MCF 10A (cell line): ENCODE measurements at regions of chr20 and their contacts with region 1.

Region 1: GRCh38 chr20:47317127-47317895 is 39.2 kb downstream of the ZMYND8 start:
- DNase-seq: peak; percentile 100
- H3K4me3 Mint-ChIP-seq: peak overlapping the region; percentile 65
- H3K27ac Mint-ChIP-seq: peak overlapping the region; percentile 94
- H3K4me1 Mint-ChIP-seq: peaks cover 65% of the 10 kb centered on the region
- H3K27me3 Mint-ChIP-seq: no peaks in the 10 kb centered on the region
- CTCF ChIP-seq: no peak

Region 2: GRCh38 chr20:47231382-47232039 is 85.8 kb before region 1 on chr20:
- CTCF ChIA-PET with region 1: no interaction called
- POLR2A ChIA-PET with region 1: no interaction called
- intact Hi-C with region 1: no loop called
- DNase-seq: no peak
- H3K4me3 Mint-ChIP-seq: no peak overlapping the region
- H3K27ac Mint-ChIP-seq: no peak overlapping the region
- H3K4me1 Mint-ChIP-seq: no peaks in the 10 kb centered on the region
- H3K27me3 Mint-ChIP-seq: no peaks in the 10 kb centered on the region
- CTCF ChIP-seq: no peak

Region 3: GRCh38 chr20:47304287-47304686 is 13.0 kb before region 1 on chr20:
- CTCF ChIA-PET with region 1: interaction called, 3 read pairs
- POLR2A ChIA-PET with region 1: interaction called, 63 read pairs
- intact Hi-C with region 1: no loop called
- DNase-seq: no peak
- H3K4me3 Mint-ChIP-seq: no peak overlapping the region
- H3K27ac Mint-ChIP-seq: peak overlapping the region; percentile 49
- H3K4me1 Mint-ChIP-seq: peaks cover 15% of the 10 kb centered on the region
- H3K27me3 Mint-ChIP-seq: no peaks in the 10 kb centered on the region
- CTCF ChIP-seq: no peak

Region 4: DNA sequence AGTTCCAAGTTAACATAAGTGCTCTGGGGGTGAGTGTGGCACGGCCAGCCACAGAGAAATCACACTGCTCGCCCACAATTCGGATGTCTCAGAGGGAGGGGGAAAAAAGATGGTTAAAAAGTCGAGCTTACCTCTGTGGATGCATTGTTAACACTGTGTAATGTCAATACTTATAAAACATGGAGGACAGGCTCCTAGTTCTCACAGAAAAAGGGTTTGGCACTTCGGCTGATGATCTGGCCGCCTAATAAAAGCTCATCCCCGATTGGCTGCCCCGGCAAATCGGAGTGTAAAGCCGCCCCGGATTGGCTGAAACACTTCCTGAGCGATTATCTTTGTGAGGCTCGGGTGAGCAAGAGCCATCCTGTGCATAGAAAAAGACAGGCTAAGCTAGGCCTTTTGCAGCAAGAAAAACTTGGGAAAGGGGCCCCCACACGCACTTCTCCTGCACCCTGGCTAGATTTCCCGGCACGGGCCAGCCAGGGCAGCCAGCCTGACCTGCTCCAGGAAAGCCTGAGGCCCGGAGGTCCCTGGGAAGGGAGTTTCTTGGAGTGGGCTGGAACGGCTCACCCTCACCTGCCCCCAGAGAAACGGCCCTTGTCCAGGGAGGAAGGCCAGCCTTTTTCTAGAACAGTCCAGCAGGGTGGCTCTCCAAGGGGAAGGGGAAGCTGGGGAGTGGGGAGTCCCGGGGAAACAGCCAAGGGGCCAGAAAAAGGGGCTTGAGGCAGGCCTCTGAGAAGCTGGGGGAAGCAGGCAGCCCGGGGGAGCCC is 39.4 kb after region 1 on chr20 and contains the start of gene ZMYND8:
- CTCF ChIA-PET with region 1: interaction called, 50 read pairs
- POLR2A ChIA-PET with region 1: interaction called, 1,977 read pairs
- intact Hi-C with region 1: loop called (anchors 1 kb)
- DNase-seq: peak; percentile 94
- H3K4me3 Mint-ChIP-seq: peak within 1 kb of the TSS; percentile 70
- H3K27ac Mint-ChIP-seq: no peak within 1 kb of the TSS
- H3K4me1 Mint-ChIP-seq: peaks cover 72% of the 10 kb centered on the region
- H3K27me3 Mint-ChIP-seq: no peaks in the 10 kb centered on the region
- CTCF ChIP-seq: no peak
- total RNA-seq, gene ZMYND8: 126 and 127 TPM in 2 replicates

Region 5: GRCh38 chr20:47392015-47392720 is 74.9 kb after region 1 on chr20:
- CTCF ChIA-PET with region 1: interaction called, 3 read pairs
- POLR2A ChIA-PET with region 1: interaction called, 12 read pairs
- intact Hi-C with region 1: no loop called
- DNase-seq: peak; percentile 97
- H3K4me3 Mint-ChIP-seq: peak overlapping the region; percentile 67
- H3K27ac Mint-ChIP-seq: peak overlapping the region; percentile 98
- H3K4me1 Mint-ChIP-seq: peaks cover 22% of the 10 kb centered on the region
- H3K27me3 Mint-ChIP-seq: no peaks in the 10 kb centered on the region
- CTCF ChIP-seq: no peak

Region 6: GRCh38 chr20:47464380-47465101 is 147.2 kb after region 1 on chr20:
- CTCF ChIA-PET with region 1: interaction called, 5 read pairs
- POLR2A ChIA-PET with region 1: interaction called, 5 read pairs
- intact Hi-C with region 1: loop called (anchors 2 kb)
- DNase-seq: peak; percentile 99
- H3K4me3 Mint-ChIP-seq: peak overlapping the region; percentile 51
- H3K27ac Mint-ChIP-seq: peak overlapping the region; percentile 72
- H3K4me1 Mint-ChIP-seq: peaks cover 38% of the 10 kb centered on the region
- H3K27me3 Mint-ChIP-seq: no peaks in the 10 kb centered on the region
- CTCF ChIP-seq: no peak

Region 7: DNA sequence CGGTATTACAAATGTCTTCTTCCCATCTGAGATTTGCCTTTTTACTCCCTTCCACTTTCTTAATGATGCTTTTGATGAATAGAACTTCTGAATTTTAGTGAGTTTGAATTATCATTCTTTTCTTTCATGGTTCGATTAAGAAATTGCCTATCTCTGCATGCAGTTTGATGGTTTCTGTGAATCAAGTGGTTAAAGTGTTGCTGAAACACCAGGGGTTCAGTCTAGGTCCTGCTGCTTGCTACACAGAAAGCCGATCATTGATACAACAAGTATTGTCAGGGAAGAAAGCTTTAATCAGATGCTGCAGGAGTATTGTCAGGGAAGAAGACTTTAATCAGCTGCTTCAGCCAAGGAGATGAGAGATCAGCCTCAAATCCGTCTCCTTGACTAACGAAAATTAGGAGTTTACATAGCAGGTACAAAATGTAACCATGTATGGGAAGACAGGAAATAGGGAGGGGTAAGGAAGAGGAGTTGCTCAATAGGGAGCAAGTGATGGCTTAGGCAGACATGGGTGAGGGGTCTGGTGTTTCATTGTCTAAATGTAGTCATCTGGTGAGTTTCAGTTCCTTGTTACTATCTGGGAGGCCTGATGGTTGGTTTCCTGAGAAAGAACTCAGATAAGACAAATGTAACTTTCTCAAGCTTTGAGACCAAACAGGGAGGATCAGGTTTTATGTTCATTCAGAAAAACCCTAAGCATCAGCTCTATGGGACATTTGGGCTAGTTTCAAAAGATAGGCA is 685.1 kb after region 1 on chr20:
- CTCF ChIA-PET with region 1: no interaction called
- POLR2A ChIA-PET with region 1: no interaction called
- intact Hi-C with region 1: no loop called
- DNase-seq: no peak
- H3K4me3 Mint-ChIP-seq: no peak overlapping the region
- H3K27ac Mint-ChIP-seq: no peak overlapping the region
- H3K4me1 Mint-ChIP-seq: peaks cover 30% of the 10 kb centered on the region
- H3K27me3 Mint-ChIP-seq: no peaks in the 10 kb centered on the region
- CTCF ChIP-seq: no peak